Natural killer cell (primary cell): ENCODE measurements at regions of chr10 and their contacts with region 1.

Region 1: DNA sequence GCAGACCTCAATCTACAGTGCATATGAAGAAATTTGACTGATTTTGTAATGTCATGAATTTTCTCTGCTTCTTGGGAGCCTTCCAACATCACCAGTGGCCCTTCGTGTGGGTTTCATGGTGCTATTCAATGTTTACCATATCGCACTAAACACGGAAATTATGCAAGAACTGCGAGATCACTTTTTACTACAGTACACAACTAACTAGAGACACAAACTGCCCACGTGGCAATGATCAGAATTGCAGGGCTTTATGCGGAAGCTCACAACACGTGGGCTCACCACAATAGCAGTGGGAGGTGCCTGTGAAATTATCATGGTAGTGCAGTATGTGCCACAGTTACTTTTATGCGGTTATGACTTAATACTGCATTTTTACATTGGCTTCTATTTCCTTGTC is 449.7 kb upstream of the KLF6 start:
- DNase-seq: peak; percentile 71 to 81
- ATAC-seq: peak; percentile 94 to 97 (median 96)
- H3K4me3 ChIP-seq: no peak overlapping the region
- H3K4me3 Mint-ChIP-seq: peak overlapping the region; percentile 67
- H3K27ac ChIP-seq: peak overlapping the region; percentile 54
- H3K27ac Mint-ChIP-seq: peak overlapping the region; percentile 83 to 89
- H3K4me1 ChIP-seq: peaks cover 14% of the 10 kb centered on the region
- H3K4me1 Mint-ChIP-seq: peaks cover 25 to 30% of the 10 kb centered on the region in 2 donors
- H3K27me3 ChIP-seq: no peaks in the 10 kb centered on the region
- H3K27me3 Mint-ChIP-seq: peaks cover 0 to 2% of the 10 kb centered on the region in 2 donors
- CTCF ChIP-seq: peak; percentile 58

Region 2: GRCh38 chr10:3222065-3222464 is 1012.6 kb before region 1 on chr10:
- intact Hi-C with region 1: loop called (anchors 2 kb)
- DNase-seq: peak in 1 of 2 donors; percentile 31
- ATAC-seq: peak; percentile 58 to 68 (median 63)
- H3K4me3 ChIP-seq: no peak overlapping the region
- H3K4me3 Mint-ChIP-seq: no peak overlapping the region
- H3K27ac ChIP-seq: peak overlapping the region; percentile 62
- H3K27ac Mint-ChIP-seq: no peak overlapping the region
- H3K4me1 ChIP-seq: peaks cover 3% of the 10 kb centered on the region
- H3K4me1 Mint-ChIP-seq: peaks cover 9 to 10% of the 10 kb centered on the region in 2 donors
- H3K27me3 ChIP-seq: no peaks in the 10 kb centered on the region
- H3K27me3 Mint-ChIP-seq: peaks cover 0 to 3% of the 10 kb centered on the region in 2 donors
- CTCF ChIP-seq: no peak

Region 3: GRCh38 chr10:3776796-3777571 is 457.7 kb before region 1 on chr10:
- intact Hi-C with region 1: loop called (anchors 10 kb)
- DNase-seq: peak in 1 of 2 donors; percentile 80
- ATAC-seq: peak in 2 of 3 donors; percentile 21 to 27
- H3K4me3 ChIP-seq: no peak overlapping the region
- H3K4me3 Mint-ChIP-seq: peak overlapping the region; percentile 69
- H3K27ac ChIP-seq: peak overlapping the region; percentile 20
- H3K27ac Mint-ChIP-seq: peak overlapping the region; percentile 100
- H3K4me1 ChIP-seq: peaks cover 65% of the 10 kb centered on the region
- H3K4me1 Mint-ChIP-seq: peaks cover 72 to 86% of the 10 kb centered on the region in 2 donors
- H3K27me3 ChIP-seq: no peaks in the 10 kb centered on the region
- H3K27me3 Mint-ChIP-seq: no peaks in the 10 kb centered on the region
- CTCF ChIP-seq: no peak

Region 4: GRCh38 chr10:3805791-3806461 is 428.7 kb before region 1 on chr10:
- intact Hi-C with region 1: loop called (anchors 1 kb)
- DNase-seq: peak; percentile 49 to 73
- ATAC-seq: peak in 1 of 3 donors; percentile 3
- H3K4me3 ChIP-seq: no peak overlapping the region
- H3K4me3 Mint-ChIP-seq: peak overlapping the region; percentile 66
- H3K27ac ChIP-seq: peak overlapping the region; percentile 100
- H3K27ac Mint-ChIP-seq: no peak overlapping the region
- H3K4me1 ChIP-seq: peaks cover 76% of the 10 kb centered on the region
- H3K4me1 Mint-ChIP-seq: peaks cover 59 to 75% of the 10 kb centered on the region in 2 donors
- H3K27me3 ChIP-seq: no peaks in the 10 kb centered on the region
- H3K27me3 Mint-ChIP-seq: no peaks in the 10 kb centered on the region
- CTCF ChIP-seq: no peak

Region 5: DNA sequence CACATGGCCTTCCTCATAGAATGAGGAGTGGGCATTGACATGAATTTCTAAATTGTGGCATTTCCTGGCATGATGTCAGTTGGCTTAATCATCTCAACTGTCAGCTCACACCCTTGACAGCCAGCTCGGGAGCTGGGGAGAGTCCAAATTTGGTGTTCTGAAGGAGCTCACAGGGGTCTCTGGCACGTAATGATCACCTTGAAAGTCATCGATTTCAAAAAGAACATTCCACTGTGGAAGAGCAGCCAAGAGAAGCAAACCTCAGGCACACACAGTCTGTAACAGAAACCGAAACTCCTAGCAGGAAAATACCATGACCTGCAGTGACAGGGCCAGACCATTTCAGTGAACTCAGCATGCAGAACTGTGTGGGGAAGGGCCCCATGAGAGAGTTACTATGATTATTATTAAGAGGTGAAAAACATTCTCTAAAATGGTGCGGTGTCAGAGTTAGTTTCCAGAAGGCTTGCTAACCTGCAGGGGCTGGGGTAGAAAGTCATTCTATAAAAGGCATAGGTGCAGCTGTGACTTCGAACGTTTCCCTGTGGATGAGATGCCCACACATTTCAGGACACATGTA is 423.3 kb before region 1 on chr10:
- intact Hi-C with region 1: loop called (anchors 1 kb)
- DNase-seq: peak; percentile 47 to 76
- ATAC-seq: peak; percentile 37 to 71 (median 56)
- H3K4me3 ChIP-seq: no peak overlapping the region
- H3K4me3 Mint-ChIP-seq: peak overlapping the region; percentile 87
- H3K27ac ChIP-seq: peak overlapping the region; percentile 100
- H3K27ac Mint-ChIP-seq: no peak overlapping the region
- H3K4me1 ChIP-seq: peaks cover 68% of the 10 kb centered on the region
- H3K4me1 Mint-ChIP-seq: peaks cover 66 to 80% of the 10 kb centered on the region in 2 donors
- H3K27me3 ChIP-seq: no peaks in the 10 kb centered on the region
- H3K27me3 Mint-ChIP-seq: no peaks in the 10 kb centered on the region
- CTCF ChIP-seq: no peak

Region 6: GRCh38 chr10:3873728-3874461 is 360.8 kb before region 1 on chr10:
- intact Hi-C with region 1: loop called (anchors 5 kb)
- DNase-seq: peak in 1 of 2 donors; percentile 89
- ATAC-seq: peak; percentile 76 to 80 (median 78)
- H3K4me3 ChIP-seq: no peak overlapping the region
- H3K4me3 Mint-ChIP-seq: peak overlapping the region; percentile 33
- H3K27ac ChIP-seq: peak overlapping the region; percentile 89
- H3K27ac Mint-ChIP-seq: peak overlapping the region; percentile 83 to 90
- H3K4me1 ChIP-seq: peaks cover 29% of the 10 kb centered on the region
- H3K4me1 Mint-ChIP-seq: peaks cover 24 to 42% of the 10 kb centered on the region in 2 donors
- H3K27me3 ChIP-seq: no peaks in the 10 kb centered on the region
- H3K27me3 Mint-ChIP-seq: no peaks in the 10 kb centered on the region
- CTCF ChIP-seq: no peak

Region 7: DNA sequence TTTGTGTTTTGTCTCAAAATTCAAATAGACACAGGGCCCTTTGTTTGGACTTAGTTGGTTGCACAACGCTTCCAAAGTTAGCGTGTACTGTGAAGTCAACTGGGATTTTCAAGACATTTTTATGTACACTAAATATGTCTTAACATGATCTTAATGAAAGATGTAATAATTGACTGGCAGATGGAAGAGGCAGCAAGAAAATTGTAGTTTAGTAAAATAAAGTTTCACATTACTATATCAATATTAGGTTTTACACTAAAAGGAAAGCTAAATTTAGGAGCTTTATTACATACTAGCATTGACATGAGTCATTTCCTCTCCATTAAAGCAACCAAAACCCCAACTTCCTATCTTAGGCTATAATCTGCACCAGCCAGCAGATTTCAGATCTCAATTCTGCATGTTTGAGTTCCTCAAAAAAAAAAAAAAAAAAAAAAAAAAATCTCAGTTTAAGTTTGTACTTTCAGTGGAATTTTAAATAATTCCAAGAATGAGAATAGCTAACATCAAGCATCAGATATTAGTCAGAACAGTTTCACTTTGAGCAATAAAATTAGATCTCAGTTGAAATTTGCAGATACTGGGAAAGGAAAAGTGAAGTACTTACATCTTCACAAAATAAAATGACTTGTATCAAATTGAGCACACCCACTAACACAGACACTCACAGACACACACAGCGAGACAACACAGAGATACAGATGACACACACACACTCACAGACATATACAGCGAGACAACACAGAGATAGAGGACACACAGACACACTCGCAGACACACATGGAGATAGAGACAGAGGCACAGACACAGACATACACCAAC is 103.0 kb before region 1 on chr10:
- intact Hi-C with region 1: loop called (anchors 5 kb)
- DNase-seq: peak in 1 of 2 donors; percentile 80
- ATAC-seq: peak; percentile 88 to 93 (median 91)
- H3K4me3 ChIP-seq: no peak overlapping the region
- H3K4me3 Mint-ChIP-seq: no peak overlapping the region
- H3K27ac ChIP-seq: peak overlapping the region; percentile 60
- H3K27ac Mint-ChIP-seq: no peak overlapping the region
- H3K4me1 ChIP-seq: peaks cover 31% of the 10 kb centered on the region
- H3K4me1 Mint-ChIP-seq: peaks cover 39 to 46% of the 10 kb centered on the region in 2 donors
- H3K27me3 ChIP-seq: no peaks in the 10 kb centered on the region
- H3K27me3 Mint-ChIP-seq: no peaks in the 10 kb centered on the region
- CTCF ChIP-seq: no peak

Region 8: DNA sequence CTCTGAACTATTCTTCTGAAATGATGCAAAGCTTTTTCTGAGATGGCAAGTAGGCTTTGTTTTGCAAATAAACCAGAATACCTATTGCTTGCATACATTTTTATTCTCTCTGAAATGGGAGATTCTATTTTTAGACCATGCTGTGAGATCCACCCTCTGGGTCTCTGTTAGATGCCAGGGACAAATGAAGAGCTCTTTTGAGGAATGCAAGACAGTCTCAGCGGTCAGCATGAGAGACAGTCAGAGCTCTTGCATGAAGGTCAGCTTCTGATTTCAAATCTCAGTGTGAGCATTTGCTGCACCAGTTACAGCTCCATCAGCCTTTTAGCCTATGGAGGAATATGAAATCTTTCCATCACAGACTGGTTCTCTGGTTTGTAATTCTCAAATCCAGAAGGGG is 19.8 kb before region 1 on chr10:
- intact Hi-C with region 1: no loop called
- DNase-seq: no peak
- ATAC-seq: no peak
- H3K4me3 ChIP-seq: no peak overlapping the region
- H3K4me3 Mint-ChIP-seq: no peak overlapping the region
- H3K27ac ChIP-seq: no peak overlapping the region
- H3K27ac Mint-ChIP-seq: no peak overlapping the region
- H3K4me1 ChIP-seq: no peaks in the 10 kb centered on the region
- H3K4me1 Mint-ChIP-seq: no peaks in the 10 kb centered on the region
- H3K27me3 ChIP-seq: no peaks in the 10 kb centered on the region
- H3K27me3 Mint-ChIP-seq: peaks cover 5 to 23% of the 10 kb centered on the region in 2 donors
- CTCF ChIP-seq: no peak

Region 9: DNA sequence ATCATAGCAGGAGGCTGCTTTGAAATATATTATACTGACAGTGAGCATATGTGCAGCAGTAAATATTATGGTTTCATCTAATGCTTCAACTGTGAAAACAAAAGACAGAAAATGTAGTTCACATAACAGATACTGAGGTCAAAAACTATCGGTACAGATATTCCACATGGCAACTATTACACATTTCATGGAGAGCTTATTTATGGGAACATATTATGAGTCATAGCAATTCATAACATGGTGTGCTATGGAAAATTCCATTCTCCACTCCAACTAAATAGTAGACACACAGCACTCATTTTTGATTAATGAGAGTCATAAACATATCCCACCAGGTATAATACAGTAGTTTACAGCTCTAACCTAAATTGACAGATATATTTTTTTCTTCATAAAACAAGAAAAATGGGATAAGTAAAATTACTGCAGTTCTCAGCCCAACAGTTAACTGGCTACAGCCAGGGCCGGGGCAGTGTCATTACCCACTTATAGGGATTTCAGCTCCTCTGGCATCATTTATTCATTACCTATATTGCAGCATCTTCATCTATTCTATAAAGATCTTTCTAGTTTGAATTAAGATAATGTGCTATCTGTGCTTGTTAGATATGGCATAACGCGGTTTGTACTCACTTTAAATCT is 25.9 kb after region 1 on chr10:
- intact Hi-C with region 1: no loop called
- DNase-seq: no peak
- ATAC-seq: no peak
- H3K4me3 ChIP-seq: no peak overlapping the region
- H3K4me3 Mint-ChIP-seq: no peak overlapping the region
- H3K27ac ChIP-seq: no peak overlapping the region
- H3K27ac Mint-ChIP-seq: no peak overlapping the region
- H3K4me1 ChIP-seq: no peaks in the 10 kb centered on the region
- H3K4me1 Mint-ChIP-seq: no peaks in the 10 kb centered on the region
- H3K27me3 ChIP-seq: no peaks in the 10 kb centered on the region
- H3K27me3 Mint-ChIP-seq: peaks cover 0 to 6% of the 10 kb centered on the region in 2 donors
- CTCF ChIP-seq: no peak

Region 10: GRCh38 chr10:4384245-4384644 is 149.6 kb after region 1 on chr10:
- intact Hi-C with region 1: no loop called
- DNase-seq: no peak
- ATAC-seq: no peak
- H3K4me3 ChIP-seq: no peak overlapping the region
- H3K4me3 Mint-ChIP-seq: no peak overlapping the region
- H3K27ac ChIP-seq: no peak overlapping the region
- H3K27ac Mint-ChIP-seq: no peak overlapping the region
- H3K4me1 ChIP-seq: no peaks in the 10 kb centered on the region
- H3K4me1 Mint-ChIP-seq: no peaks in the 10 kb centered on the region
- H3K27me3 ChIP-seq: no peaks in the 10 kb centered on the region
- H3K27me3 Mint-ChIP-seq: peaks cover 18 to 25% of the 10 kb centered on the region in 2 donors
- CTCF ChIP-seq: no peak